Activated naive CD4-positive, alpha-beta T cell treated with anti-CD3 and anti-CD28 coated beads, Interleukin-2, amount 10 ng/mL, durations not matched to agents 7 days and 5 days (primary cell): ENCODE measurements at regions of chr7 and their contacts with region 1.

Region 1: DNA sequence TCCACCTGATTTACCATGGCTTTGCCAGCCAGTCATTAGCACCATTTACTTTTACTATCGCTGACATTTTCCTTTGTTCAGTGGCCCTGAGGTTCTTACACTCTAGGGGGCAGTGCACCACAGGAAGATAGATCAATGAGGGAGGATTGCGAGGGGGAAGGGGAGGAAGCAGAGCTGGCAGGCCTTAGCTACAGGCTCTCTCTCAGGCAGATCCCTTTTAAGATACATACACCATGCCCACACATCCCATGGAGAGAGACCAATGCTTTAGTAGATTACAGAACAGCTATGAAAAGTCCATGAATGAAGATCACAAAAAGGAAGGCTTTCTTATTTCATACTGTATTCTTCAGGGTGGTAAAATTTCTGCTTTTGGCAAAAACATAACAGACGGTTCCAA is 47.4 kb downstream of the DENND11 start:
- DNase-seq: peak; percentile 79
- H3K4me3 Mint-ChIP-seq: no peak overlapping the region
- H3K27ac Mint-ChIP-seq: peak overlapping the region; percentile 13
- H3K4me1 Mint-ChIP-seq: peaks cover 6% of the 10 kb centered on the region
- H3K27me3 Mint-ChIP-seq: no peaks in the 10 kb centered on the region

Region 2: DNA sequence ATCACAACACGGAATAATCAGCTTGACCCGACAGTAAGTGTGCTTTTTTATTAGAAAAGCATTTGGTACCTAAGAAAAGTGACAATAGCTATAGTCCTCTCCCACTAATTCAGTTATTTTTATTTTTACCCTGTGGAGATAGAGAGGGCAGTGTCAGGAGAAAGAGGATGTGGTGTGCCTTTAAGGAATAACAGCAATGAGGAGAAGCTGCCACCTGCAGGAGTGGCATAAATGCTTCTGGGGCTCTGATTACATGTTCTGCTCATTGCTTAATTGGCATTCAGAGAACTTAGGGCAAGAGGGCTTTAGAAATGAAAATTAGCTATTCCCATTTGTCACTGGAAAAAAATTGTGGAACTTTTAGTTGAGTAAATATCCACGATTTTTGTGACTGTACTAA is 12.7 kb before region 1 on chr7:
- CTCF ChIA-PET with region 1: interaction called, 15 read pairs
- DNase-seq: no peak
- H3K4me3 Mint-ChIP-seq: no peak overlapping the region
- H3K27ac Mint-ChIP-seq: no peak overlapping the region
- H3K4me1 Mint-ChIP-seq: no peaks in the 10 kb centered on the region
- H3K27me3 Mint-ChIP-seq: no peaks in the 10 kb centered on the region

Region 3: DNA sequence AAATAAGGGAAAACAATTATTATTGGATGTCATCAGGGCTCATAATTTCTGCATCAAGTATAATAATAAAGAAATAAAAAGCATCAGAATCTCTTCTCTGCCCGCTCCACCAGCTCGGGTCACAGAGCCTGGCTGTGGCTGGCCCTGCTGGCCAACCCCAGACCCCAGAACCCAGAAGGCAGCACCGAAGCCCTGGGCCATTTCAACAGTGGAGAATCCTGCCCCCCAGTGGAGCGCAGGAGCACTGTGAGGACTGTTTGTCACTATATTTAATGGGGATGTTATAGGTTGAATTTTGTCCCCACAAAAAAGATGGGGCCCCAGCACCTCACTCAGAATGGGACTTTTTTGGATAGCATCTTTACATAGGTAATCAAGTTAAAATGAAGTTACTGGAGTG is 20.2 kb after region 1 on chr7:
- CTCF ChIA-PET with region 1: interaction called, 26 read pairs
- DNase-seq: no peak
- H3K4me3 Mint-ChIP-seq: no peak overlapping the region
- H3K27ac Mint-ChIP-seq: no peak overlapping the region
- H3K4me1 Mint-ChIP-seq: peaks cover 33% of the 10 kb centered on the region
- H3K27me3 Mint-ChIP-seq: no peaks in the 10 kb centered on the region

Region 4: DNA sequence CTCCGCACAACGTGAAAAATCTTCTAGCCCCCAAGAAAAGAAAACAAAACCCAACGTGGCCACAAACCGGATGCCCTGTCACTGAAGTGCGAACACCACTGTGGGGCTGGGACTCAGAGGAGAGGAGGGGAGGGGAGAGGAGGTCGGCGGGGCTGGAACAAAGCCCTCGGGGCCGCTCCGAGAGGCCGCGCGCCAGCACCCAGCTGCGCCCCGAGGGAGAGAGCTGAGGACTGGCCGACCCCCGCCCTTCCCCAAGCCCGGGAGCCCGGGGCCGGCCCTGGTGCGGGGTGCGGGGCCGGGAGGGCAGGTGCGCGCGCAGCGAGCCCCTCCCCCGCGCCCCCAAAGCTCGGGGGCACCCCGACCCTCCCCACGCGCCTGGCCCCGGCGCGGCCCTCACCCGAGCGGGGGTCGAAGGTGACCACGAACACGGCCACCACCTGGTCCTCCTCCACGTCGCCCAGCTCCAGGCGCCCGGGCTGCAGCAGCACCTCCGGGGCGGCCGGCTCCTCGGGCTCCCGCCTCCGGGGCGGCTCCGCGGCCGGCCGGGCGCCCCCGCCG is 47.0 kb after region 1 on chr7:
- CTCF ChIA-PET with region 1: interaction called, 15 read pairs
- DNase-seq: peak; percentile 85
- H3K4me3 Mint-ChIP-seq: peak overlapping the region; percentile 76
- H3K27ac Mint-ChIP-seq: peak overlapping the region; percentile 73
- H3K4me1 Mint-ChIP-seq: peaks cover 31% of the 10 kb centered on the region
- H3K27me3 Mint-ChIP-seq: peaks cover 17% of the 10 kb centered on the region

Region 5: GRCh38 chr7:141737834-141738591 is 83.5 kb after region 1 on chr7 and contains the start of gene SSBP1:
- CTCF ChIA-PET with region 1: interaction called, 52 read pairs
- DNase-seq: peak; percentile 94
- H3K4me3 Mint-ChIP-seq: peak within 1 kb of the TSS; percentile 94
- H3K27ac Mint-ChIP-seq: peak within 1 kb of the TSS; percentile 96
- H3K4me1 Mint-ChIP-seq: peaks cover 33% of the 10 kb centered on the region
- H3K27me3 Mint-ChIP-seq: no peaks in the 10 kb centered on the region

Region 6: GRCh38 chr7:141785706-141786552 is 131.4 kb after region 1 on chr7:
- CTCF ChIA-PET with region 1: interaction called, 29 read pairs
- DNase-seq: peak; percentile 31
- H3K4me3 Mint-ChIP-seq: no peak overlapping the region
- H3K27ac Mint-ChIP-seq: no peak overlapping the region
- H3K4me1 Mint-ChIP-seq: no peaks in the 10 kb centered on the region
- H3K27me3 Mint-ChIP-seq: no peaks in the 10 kb centered on the region